Left ventricle myocardium superior (tissue), 1 donor: ENCODE measurements at regions of chr4 and their contacts with region 1.

Region 1: GRCh38 chr4:74370912-74371311 is 6.0 kb downstream of the EREG start:
- DNase-seq: no peak
- ATAC-seq: peak; percentile 74

Region 2: DNA sequence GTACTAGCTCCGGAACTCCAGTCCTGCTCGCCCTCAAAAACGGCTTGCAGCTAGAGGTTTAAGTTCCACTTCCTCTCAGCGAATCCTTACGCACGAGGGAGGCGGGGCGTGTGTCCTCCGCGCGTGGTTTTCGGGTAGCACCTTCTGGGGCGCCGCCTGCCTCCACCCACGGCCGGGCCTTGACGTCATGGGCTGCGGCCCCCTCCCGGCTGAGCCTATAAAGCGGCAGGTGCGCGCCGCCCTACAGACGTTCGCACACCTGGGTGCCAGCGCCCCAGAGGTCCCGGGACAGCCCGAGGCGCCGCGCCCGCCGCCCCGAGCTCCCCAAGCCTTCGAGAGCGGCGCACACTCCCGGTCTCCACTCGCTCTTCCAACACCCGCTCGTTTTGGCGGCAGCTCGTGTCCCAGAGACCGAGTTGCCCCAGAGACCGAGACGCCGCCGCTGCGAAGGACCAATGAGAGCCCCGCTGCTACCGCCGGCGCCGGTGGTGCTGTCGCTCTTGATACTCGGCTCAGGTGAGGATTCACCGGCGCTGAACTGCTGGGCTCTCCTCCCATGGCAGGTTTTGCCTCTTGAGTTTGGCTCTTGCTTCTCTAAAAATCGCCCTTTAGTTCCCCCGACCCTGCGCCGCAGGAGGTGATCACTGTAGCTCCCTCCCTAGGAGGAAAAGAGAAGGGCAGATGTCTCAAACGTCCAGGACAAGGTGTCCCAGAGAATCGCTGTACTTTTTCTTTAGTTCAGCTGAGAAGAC is 74.2 kb after region 1 on chr4 and contains the start of gene AREG:
- intact Hi-C with region 1: loop called (anchors 10 kb)
- DNase-seq: peak; percentile 85
- ATAC-seq: peak; percentile 93
- total RNA-seq, gene AREG: 3.4 TPM

Region 3: GRCh38 chr4:74671080-74671698 is 300.3 kb after region 1 on chr4:
- intact Hi-C with region 1: loop called (anchors 5 kb)
- DNase-seq: no peak
- ATAC-seq: no peak